CD4-positive, alpha-beta T cell (primary cell): ENCODE measurements at regions of chr19 and their contacts with region 1.

Region 1: DNA sequence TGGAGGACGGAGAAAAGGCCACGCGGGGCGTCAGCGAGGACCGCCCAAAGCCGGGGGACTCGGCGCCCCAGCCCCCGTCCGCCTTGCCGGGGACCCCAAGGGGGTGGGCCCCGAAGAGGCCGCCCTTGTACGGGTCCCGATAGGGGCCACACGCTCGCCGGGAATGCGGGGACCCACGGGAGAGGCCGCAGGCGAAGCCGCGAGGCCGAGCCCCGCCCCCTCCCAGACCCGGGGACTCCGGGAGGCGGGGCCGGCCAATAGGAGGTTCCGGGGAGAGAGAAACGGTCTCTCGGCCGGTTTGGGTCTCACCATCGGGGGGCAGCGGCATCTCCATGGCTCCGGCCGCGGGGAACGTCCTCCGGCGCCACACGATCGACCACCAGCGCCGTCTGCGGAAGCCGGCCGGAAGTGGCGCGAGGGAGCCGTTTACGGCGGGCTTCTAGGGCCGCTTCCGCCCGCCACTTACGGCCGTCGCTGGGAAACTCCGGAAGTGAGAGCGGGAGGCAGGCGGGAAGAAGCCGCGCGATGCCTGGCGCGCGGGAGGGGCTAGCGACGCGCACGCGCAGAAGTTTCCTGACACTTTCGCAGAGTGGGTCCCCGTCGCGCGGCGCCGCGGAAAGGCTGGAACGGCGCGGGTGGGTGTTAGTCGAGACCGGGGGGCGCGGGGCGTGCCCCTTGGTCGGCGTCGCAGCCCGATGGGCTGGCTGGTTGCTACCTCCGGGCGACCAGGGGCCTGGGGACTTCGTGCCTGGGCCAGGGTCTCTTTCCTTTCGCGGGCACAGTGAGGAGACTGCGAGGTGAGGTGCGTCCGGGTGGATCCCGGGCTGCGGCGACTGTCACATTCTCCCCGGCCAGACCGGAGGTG is at the start of gene CHERP:
- DNase-seq: peak; percentile 88 to 98 (median 94)
- ATAC-seq: peak; percentile 87
- H3K4me3 ChIP-seq: peak within 1 kb of the TSS; percentile 95
- H3K4me3 Mint-ChIP-seq: peak within 1 kb of the TSS; percentile 97
- H3K27ac ChIP-seq: peak within 1 kb of the TSS; percentile 75 to 79
- H3K27ac Mint-ChIP-seq: peak within 1 kb of the TSS; percentile 84
- H3K4me1 ChIP-seq: peaks cover 71% of the 10 kb centered on the region
- H3K4me1 Mint-ChIP-seq: peaks cover 47% of the 10 kb centered on the region
- H3K27me3 ChIP-seq: no peaks in the 10 kb centered on the region
- H3K27me3 Mint-ChIP-seq: no peaks in the 10 kb centered on the region
- CTCF ChIP-seq: no peak
- total RNA-seq, gene CHERP: 47.1 to 48.2 TPM

Region 2: GRCh38 chr19:16482736-16483135 is 59.5 kb before region 1 on chr19:
- CTCF ChIA-PET with region 1: no interaction called
- POLR2A ChIA-PET with region 1: no interaction called
- intact Hi-C with region 1: no loop called
- DNase-seq: no peak
- ATAC-seq: no peak
- H3K4me3 ChIP-seq: no peak overlapping the region
- H3K4me3 Mint-ChIP-seq: no peak overlapping the region
- H3K27ac ChIP-seq: no peak overlapping the region
- H3K27ac Mint-ChIP-seq: no peak overlapping the region
- H3K4me1 ChIP-seq: no peaks in the 10 kb centered on the region
- H3K4me1 Mint-ChIP-seq: no peaks in the 10 kb centered on the region
- H3K27me3 ChIP-seq: no peaks in the 10 kb centered on the region
- H3K27me3 Mint-ChIP-seq: no peaks in the 10 kb centered on the region
- CTCF ChIP-seq: no peak

Region 3: GRCh38 chr19:16495982-16496612 is 46.2 kb before region 1 on chr19 and contains the starts of genes C19orf44 and CALR3:
- CTCF ChIA-PET with region 1: interaction called, 6 read pairs
- POLR2A ChIA-PET with region 1: interaction called, 3 read pairs
- intact Hi-C with region 1: loop called (anchors 1 kb)
- DNase-seq: peak; percentile 93 to 98 (median 96)
- ATAC-seq: peak; percentile 99
- H3K4me3 ChIP-seq: peak within 1 kb of the TSS; percentile 64
- H3K4me3 Mint-ChIP-seq: peak within 1 kb of the TSS; percentile 90
- H3K27ac ChIP-seq: no peak within 1 kb of the TSS
- H3K27ac Mint-ChIP-seq: peak within 1 kb of the TSS; percentile 71
- H3K4me1 ChIP-seq: peaks cover 15% of the 10 kb centered on the region
- H3K4me1 Mint-ChIP-seq: peaks cover 14% of the 10 kb centered on the region
- H3K27me3 ChIP-seq: no peaks in the 10 kb centered on the region
- H3K27me3 Mint-ChIP-seq: no peaks in the 10 kb centered on the region
- CTCF ChIP-seq: no peak
- total RNA-seq, gene C19orf44: 0.78 to 1.0 TPM
- total RNA-seq, gene CALR3: not detected

Region 4: DNA sequence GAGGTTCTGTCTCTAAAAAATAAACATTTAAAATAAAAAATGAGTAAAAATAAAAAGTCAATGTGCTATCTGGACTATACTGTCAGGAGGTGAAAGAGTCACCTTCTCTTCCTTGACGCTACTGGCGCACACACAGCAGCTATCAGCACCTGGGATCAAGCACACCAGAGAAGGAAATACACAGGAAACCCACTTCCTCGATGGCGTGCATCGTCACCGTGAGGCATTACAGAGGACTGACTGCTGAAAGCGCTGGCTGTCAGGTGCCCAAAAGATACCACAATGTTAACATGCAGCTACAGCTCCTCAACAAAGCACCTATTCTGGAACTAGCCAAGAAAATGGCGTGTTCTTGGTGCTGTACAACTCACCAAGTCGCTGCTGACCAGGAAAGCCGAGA is 23.9 kb after region 1 on chr19:
- CTCF ChIA-PET with region 1: no interaction called
- POLR2A ChIA-PET with region 1: interaction called, 12 read pairs
- intact Hi-C with region 1: loop called in 1 of 2 experiments (anchors 1 kb)
- DNase-seq: peak; percentile 72 to 96 (median 81)
- ATAC-seq: peak; percentile 98
- H3K4me3 ChIP-seq: peak overlapping the region; percentile 15
- H3K4me3 Mint-ChIP-seq: peak overlapping the region; percentile 89
- H3K27ac ChIP-seq: peak overlapping the region; percentile 83 to 84
- H3K27ac Mint-ChIP-seq: peak overlapping the region; percentile 96
- H3K4me1 ChIP-seq: peaks cover 64% of the 10 kb centered on the region
- H3K4me1 Mint-ChIP-seq: peaks cover 48% of the 10 kb centered on the region
- H3K27me3 ChIP-seq: no peaks in the 10 kb centered on the region
- H3K27me3 Mint-ChIP-seq: no peaks in the 10 kb centered on the region
- CTCF ChIP-seq: no peak

Region 5: GRCh38 chr19:16572332-16573211 is 30.3 kb after region 1 on chr19 and contains the start of gene SLC35E1:
- CTCF ChIA-PET with region 1: no interaction called
- POLR2A ChIA-PET with region 1: no interaction called
- intact Hi-C with region 1: loop called in 1 of 2 experiments (anchors 1 kb)
- DNase-seq: peak; percentile 82 to 96 (median 88)
- ATAC-seq: peak; percentile 90
- H3K4me3 ChIP-seq: peak within 1 kb of the TSS; percentile 100
- H3K4me3 Mint-ChIP-seq: peak within 1 kb of the TSS; percentile 91
- H3K27ac ChIP-seq: peak within 1 kb of the TSS; percentile 89 to 97
- H3K27ac Mint-ChIP-seq: peak within 1 kb of the TSS; percentile 90
- H3K4me1 ChIP-seq: peaks cover 72% of the 10 kb centered on the region
- H3K4me1 Mint-ChIP-seq: peaks cover 60% of the 10 kb centered on the region
- H3K27me3 ChIP-seq: no peaks in the 10 kb centered on the region
- H3K27me3 Mint-ChIP-seq: no peaks in the 10 kb centered on the region
- CTCF ChIP-seq: no peak
- total RNA-seq, gene SLC35E1: 72.3 to 76.3 TPM

Region 6: GRCh38 chr19:16584248-16585141 is 42.2 kb after region 1 on chr19:
- CTCF ChIA-PET with region 1: interaction called, 3 read pairs
- POLR2A ChIA-PET with region 1: interaction called, 6 read pairs
- intact Hi-C with region 1: loop called in 1 of 2 experiments (anchors 1 kb)
- DNase-seq: peak; percentile 74 to 98 (median 88)
- ATAC-seq: peak; percentile 78
- H3K4me3 ChIP-seq: peak overlapping the region; percentile 46
- H3K4me3 Mint-ChIP-seq: peak overlapping the region; percentile 81
- H3K27ac ChIP-seq: peak overlapping the region; percentile 77 to 85
- H3K27ac Mint-ChIP-seq: peak overlapping the region; percentile 98
- H3K4me1 ChIP-seq: peaks cover 90% of the 10 kb centered on the region
- H3K4me1 Mint-ChIP-seq: peaks cover 81% of the 10 kb centered on the region
- H3K27me3 ChIP-seq: no peaks in the 10 kb centered on the region
- H3K27me3 Mint-ChIP-seq: no peaks in the 10 kb centered on the region
- CTCF ChIP-seq: no peak

Region 7: DNA sequence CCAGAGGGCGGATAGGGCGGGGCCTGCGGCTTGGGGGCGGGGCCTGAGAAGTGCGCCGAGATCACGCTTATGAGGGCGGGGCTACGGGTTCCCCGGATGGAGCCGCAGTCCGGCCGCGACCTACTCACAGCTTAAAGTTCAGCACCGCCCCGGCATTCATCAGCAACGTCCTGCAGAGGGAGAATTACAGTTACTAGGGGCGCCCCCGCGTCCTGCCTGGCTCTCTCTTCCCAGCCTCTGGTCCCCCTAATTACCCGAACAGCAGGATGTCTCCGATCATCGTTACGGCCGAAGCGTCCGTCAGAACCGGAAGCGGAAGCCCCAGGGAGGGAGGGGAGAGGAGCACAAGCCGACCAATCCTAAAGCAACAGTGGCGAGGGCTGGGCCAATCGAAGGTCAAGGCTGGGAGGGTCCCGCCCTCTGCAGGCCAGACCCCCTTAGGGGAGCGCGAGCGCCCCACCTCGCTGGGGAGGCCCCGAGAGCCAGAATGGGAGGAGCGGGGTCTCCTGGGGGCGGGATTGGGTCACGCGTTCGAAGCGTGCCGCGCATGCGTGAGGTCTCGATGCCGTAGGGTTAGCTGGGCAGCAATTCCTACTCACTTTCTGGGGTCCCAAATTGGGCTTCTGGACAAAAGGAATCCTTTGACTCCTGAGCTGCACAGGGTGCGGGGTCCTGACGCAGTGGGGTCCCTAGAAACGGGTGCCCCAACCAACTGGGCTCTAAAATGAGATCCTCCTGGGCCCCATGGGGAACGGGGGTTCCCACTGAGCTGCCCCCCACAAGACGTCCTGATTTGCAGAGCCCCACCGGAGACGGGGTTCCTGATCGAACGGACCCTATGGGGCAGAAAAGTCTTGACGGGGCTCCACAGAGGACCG is 117.8 kb after region 1 on chr19 and contains the start of gene SMIM7:
- CTCF ChIA-PET with region 1: interaction called, 3 read pairs
- POLR2A ChIA-PET with region 1: interaction called, 6 read pairs
- intact Hi-C with region 1: loop called (anchors 1 to 2 kb)
- DNase-seq: peak; percentile 97 to 100 (median 98)
- ATAC-seq: peak; percentile 96
- H3K4me3 ChIP-seq: peak within 1 kb of the TSS; percentile 92
- H3K4me3 Mint-ChIP-seq: peak within 1 kb of the TSS; percentile 100
- H3K27ac ChIP-seq: peak within 1 kb of the TSS; percentile 75 to 93
- H3K27ac Mint-ChIP-seq: peak within 1 kb of the TSS; percentile 98
- H3K4me1 ChIP-seq: peaks cover 51% of the 10 kb centered on the region
- H3K4me1 Mint-ChIP-seq: peaks cover 50% of the 10 kb centered on the region
- H3K27me3 ChIP-seq: no peaks in the 10 kb centered on the region
- H3K27me3 Mint-ChIP-seq: no peaks in the 10 kb centered on the region
- CTCF ChIP-seq: no peak
- total RNA-seq, gene SMIM7: 44.3 to 47.4 TPM